H1 (cell line): ENCODE measurements at regions of chr15 and their contacts with region 1.

Region 1: DNA sequence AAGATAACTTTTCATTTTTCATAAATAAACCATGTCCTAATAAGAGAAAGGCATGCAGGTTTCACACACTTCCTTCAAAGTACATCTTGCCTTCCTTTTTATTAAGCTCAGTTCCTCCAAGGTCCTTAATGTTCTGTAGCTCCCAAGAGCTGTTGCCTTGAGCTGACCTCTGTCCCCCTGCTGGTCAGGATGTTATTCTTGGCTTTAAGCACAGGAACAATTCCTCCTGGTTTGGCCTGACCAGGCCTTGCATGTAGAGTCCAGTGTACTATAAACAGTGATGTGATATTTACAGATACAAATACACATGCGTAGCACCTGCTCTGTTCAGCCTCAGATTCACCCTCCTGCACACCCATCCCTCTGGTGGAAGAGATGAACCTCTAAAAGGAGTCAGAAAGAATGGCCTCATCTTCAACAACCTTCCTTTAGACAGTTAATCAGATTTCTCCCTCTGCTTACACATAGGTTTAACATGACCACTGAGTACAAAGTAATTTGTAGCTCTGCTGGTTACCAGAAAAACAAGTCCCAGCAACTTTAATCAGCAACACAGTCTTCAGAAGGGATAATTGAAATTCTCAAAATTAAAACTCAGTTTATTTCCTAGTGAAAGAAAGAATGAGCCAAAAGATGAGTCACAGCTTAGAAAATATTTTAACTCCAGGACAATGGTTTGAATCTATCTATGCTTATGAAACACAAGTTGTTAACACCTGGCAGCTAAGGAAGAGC is 46.5 kb downstream of the PTPN9 start:
- DNase-seq: peak in 1 of 2 experiments; percentile 54
- H3K4me3 ChIP-seq: no peak overlapping the region
- H3K27ac ChIP-seq: no peak overlapping the region
- H3K4me1 ChIP-seq: peaks cover 0 to 6% (median 0%) of the 10 kb centered on the region in 4 experiments; a peak in 1 of 7 replicates
- H3K27me3 ChIP-seq: no peaks in the 10 kb centered on the region
- CTCF ChIP-seq: peak; percentile 45 to 80 (median 47)
- EP300 ChIP-seq: no peak
- POLR2A ChIP-seq: no peak
- RAD21 ChIP-seq: peak; percentile 30 to 51

Region 2: GRCh38 chr15:75420698-75421097 is 111.9 kb before region 1 on chr15:
- CTCF ChIA-PET with region 1: no interaction called
- POLR2A ChIA-PET with region 1: no interaction called
- DNase-seq: no peak
- H3K4me3 ChIP-seq: no peak overlapping the region
- H3K27ac ChIP-seq: no peak overlapping the region
- H3K4me1 ChIP-seq: no peaks in the 10 kb centered on the region
- H3K27me3 ChIP-seq: no peaks in the 10 kb centered on the region
- CTCF ChIP-seq: no peak
- EP300 ChIP-seq: no peak
- POLR2A ChIP-seq: no peak
- RAD21 ChIP-seq: no peak

Region 3: GRCh38 chr15:75508840-75509532 is 23.6 kb before region 1 on chr15:
- CTCF ChIA-PET with region 1: interaction called, 10 read pairs
- POLR2A ChIA-PET with region 1: interaction called, 3 read pairs
- DNase-seq: no peak
- H3K4me3 ChIP-seq: no peak overlapping the region
- H3K27ac ChIP-seq: no peak overlapping the region
- H3K4me1 ChIP-seq: no peaks in the 10 kb centered on the region
- H3K27me3 ChIP-seq: no peaks in the 10 kb centered on the region
- CTCF ChIP-seq: peak in 2 of 3 experiments; percentile 26 to 49; a peak in 2 of 4 replicates
- EP300 ChIP-seq: no peak
- POLR2A ChIP-seq: no peak
- RAD21 ChIP-seq: peak in 1 of 2 experiments; percentile 37; a peak in 2 of 4 replicates

Region 4: GRCh38 chr15:75565062-75565970 is 32.7 kb after region 1 on chr15:
- CTCF ChIA-PET with region 1: interaction called, 10 read pairs
- POLR2A ChIA-PET with region 1: no interaction called
- DNase-seq: no peak
- H3K4me3 ChIP-seq: no peak overlapping the region
- H3K27ac ChIP-seq: no peak overlapping the region
- H3K4me1 ChIP-seq: peaks cover 0 to 2% (median 0%) of the 10 kb centered on the region in 4 experiments; a peak in 2 of 7 replicates
- H3K27me3 ChIP-seq: no peaks in the 10 kb centered on the region
- CTCF ChIP-seq: no peak
- EP300 ChIP-seq: no peak
- POLR2A ChIP-seq: no peak
- RAD21 ChIP-seq: peak in 1 of 2 experiments; percentile 11; a peak in 1 of 4 replicates